Posterior vena cava (tissue), 2 donors: ENCODE measurements at regions of chr12 and their contacts with region 1.

Region 1: GRCh38 chr12:129887117-129887516 is 16.7 kb downstream of the TMEM132D start:
- DNase-seq: no peak

Region 2: GRCh38 chr12:128266541-128267296 is 1620.4 kb before region 1 on chr12 and contains the start of gene TMEM132C:
- intact Hi-C with region 1: loop called in 1 of 2 experiments (anchors 5 kb)
- DNase-seq: no peak
- total RNA-seq, gene TMEM132C: 1.1 to 1.5 TPM

Region 3: DNA sequence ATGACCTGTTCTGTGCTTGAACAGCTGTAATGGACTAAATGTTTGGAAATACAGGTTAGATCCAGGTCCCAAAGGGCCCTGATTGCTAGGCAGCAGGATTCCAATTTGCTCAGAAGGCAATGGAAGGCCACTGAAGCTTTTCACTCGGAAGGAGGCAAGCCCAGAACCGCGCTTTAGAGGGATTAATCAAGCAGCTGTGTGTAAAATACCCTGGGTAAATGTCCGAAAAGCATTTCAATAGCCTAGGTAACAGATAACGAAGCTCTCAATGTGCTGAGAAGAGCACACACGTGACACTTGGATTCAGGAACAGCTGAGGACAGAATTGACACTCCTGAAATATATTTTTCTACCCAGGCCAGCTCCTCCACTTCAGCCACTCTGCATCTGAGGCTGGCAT is 419.4 kb before region 1 on chr12:
- intact Hi-C with region 1: no loop called
- DNase-seq: no peak

Region 4: GRCh38 chr12:129641926-129642325 is 245.2 kb before region 1 on chr12:
- intact Hi-C with region 1: no loop called
- DNase-seq: no peak

Region 5: DNA sequence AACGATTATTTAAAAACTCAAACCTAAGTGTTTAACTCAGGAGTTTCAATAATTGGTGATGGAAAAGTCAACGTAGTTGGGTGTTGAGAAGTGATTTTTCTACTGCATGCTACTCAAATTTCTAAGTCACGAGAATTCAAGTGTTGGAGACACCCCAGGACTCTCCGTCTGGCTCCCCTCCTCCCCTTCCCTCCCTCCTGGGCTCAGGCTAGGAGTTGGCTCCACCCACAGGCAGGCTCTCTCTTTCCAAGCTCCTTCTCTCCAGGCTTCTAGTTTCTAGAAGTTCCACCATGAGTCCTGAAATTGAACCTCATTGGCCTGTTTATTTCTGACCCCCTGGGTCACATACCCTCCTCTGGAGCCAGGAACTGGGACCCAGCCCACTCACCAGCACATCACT is 56.3 kb before region 1 on chr12:
- intact Hi-C with region 1: no loop called
- DNase-seq: no peak